H1 (cell line): ENCODE measurements at regions of chr6 and their contacts with region 1.

Region 1: GRCh38 chr6:42404484-42404883 is 47.2 kb downstream of the TRERF1 start:
- DNase-seq: peak in 1 of 2 experiments; percentile 38
- H3K4me3 ChIP-seq: no peak overlapping the region
- H3K27ac ChIP-seq: no peak overlapping the region
- H3K4me1 ChIP-seq: peaks cover 7 to 23% (median 19%) of the 10 kb centered on the region in 4 experiments; a peak in 6 of 7 replicates
- H3K27me3 ChIP-seq: no peaks in the 10 kb centered on the region
- CTCF ChIP-seq: no peak
- EP300 ChIP-seq: no peak
- POLR2A ChIP-seq: no peak
- RAD21 ChIP-seq: no peak

Region 2: DNA sequence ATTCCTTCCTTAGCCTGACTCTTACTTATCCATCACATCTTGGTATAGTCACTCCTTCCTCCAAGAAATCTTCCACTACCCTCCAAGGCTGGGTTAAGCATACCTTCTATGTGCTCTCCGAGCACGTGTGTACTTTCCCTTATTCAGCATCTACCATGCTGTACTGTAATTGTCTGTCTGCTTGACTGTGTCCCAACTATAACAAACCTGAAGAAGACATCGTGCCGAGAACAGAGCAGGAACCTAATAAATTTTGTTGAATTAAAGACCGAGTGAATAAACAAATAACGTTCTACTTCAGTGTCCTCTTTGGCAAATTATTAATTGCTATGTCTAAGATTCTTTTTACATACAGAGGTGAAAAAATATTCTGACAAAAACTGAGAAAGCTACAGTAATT is 545.1 kb before region 1 on chr6:
- CTCF ChIA-PET with region 1: no interaction called
- POLR2A ChIA-PET with region 1: no interaction called
- DNase-seq: no peak
- H3K4me3 ChIP-seq: no peak overlapping the region
- H3K27ac ChIP-seq: no peak overlapping the region
- H3K4me1 ChIP-seq: no peaks in the 10 kb centered on the region
- H3K27me3 ChIP-seq: no peaks in the 10 kb centered on the region
- CTCF ChIP-seq: no peak
- EP300 ChIP-seq: no peak
- POLR2A ChIP-seq: no peak
- RAD21 ChIP-seq: no peak

Region 3: DNA sequence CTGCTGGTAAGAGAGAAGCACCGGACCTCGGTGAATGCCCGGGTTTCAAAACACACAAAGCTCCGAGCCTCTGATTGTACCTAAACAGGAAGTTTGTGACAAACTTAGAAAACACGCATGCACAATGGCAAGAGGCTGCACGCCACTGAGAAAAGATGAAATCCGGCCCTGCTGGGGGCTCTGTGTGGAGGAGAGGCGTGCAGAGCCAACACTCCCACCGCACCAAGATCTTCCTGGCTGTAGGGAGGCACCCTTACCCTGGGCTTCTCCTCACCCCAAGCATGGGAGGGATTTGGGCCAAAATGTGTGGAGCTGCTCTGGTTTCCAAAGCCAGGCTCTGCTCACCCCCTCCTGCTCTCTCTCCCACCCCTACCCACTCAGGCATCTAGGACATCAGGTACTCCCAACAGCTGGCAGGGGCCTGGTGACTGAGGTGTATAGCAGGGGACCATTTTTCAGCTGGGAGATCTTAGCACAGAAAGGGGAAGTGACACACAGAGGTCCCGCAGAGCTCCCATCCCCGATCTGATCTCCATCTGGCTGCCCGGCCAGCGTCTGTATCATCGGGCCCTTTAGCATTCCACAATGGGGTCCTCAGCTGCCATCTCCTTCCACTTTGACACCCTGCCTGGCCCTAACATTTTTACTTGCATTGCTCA is 37.0 kb before region 1 on chr6:
- CTCF ChIA-PET with region 1: no interaction called
- POLR2A ChIA-PET with region 1: no interaction called
- DNase-seq: no peak
- H3K4me3 ChIP-seq: no peak overlapping the region
- H3K27ac ChIP-seq: no peak overlapping the region
- H3K4me1 ChIP-seq: peaks cover 0 to 3% (median 0%) of the 10 kb centered on the region in 4 experiments; a peak in 3 of 7 replicates
- H3K27me3 ChIP-seq: no peaks in the 10 kb centered on the region
- CTCF ChIP-seq: no peak
- EP300 ChIP-seq: no peak
- POLR2A ChIP-seq: no peak
- RAD21 ChIP-seq: no peak

Region 4: GRCh38 chr6:42419490-42420280 is 15.2 kb after region 1 on chr6:
- CTCF ChIA-PET with region 1: interaction called, 13 read pairs
- POLR2A ChIA-PET with region 1: interaction called, 4 read pairs
- DNase-seq: no peak
- H3K4me3 ChIP-seq: no peak overlapping the region
- H3K27ac ChIP-seq: no peak overlapping the region; the same call in 1 of the 2 replicates
- H3K4me1 ChIP-seq: peaks cover 9 to 18% (median 14%) of the 10 kb centered on the region in 4 experiments; a peak in 6 of 7 replicates
- H3K27me3 ChIP-seq: no peaks in the 10 kb centered on the region
- CTCF ChIP-seq: peak in 2 of 3 experiments; percentile 37 to 48; a peak in 2 of 4 replicates
- EP300 ChIP-seq: no peak
- POLR2A ChIP-seq: no peak
- RAD21 ChIP-seq: peak in 1 of 2 experiments; percentile 48; a peak in 3 of 4 replicates

Region 5: GRCh38 chr6:42440778-42441696 is 36.6 kb after region 1 on chr6:
- CTCF ChIA-PET with region 1: interaction called, 11 read pairs
- POLR2A ChIA-PET with region 1: interaction called, 3 read pairs
- DNase-seq: peak in 1 of 2 experiments; percentile 37
- H3K4me3 ChIP-seq: peak overlapping the region; percentile 12 to 54 (median 32); a peak in 7 of 8 replicates
- H3K27ac ChIP-seq: peak overlapping the region; percentile 47; the same call in 1 of the 2 replicates
- H3K4me1 ChIP-seq: peaks cover 32 to 61% (median 44%) of the 10 kb centered on the region in 4 experiments
- H3K27me3 ChIP-seq: no peaks in the 10 kb centered on the region
- CTCF ChIP-seq: no peak
- EP300 ChIP-seq: no peak
- POLR2A ChIP-seq: no peak
- RAD21 ChIP-seq: no peak

Region 6: DNA sequence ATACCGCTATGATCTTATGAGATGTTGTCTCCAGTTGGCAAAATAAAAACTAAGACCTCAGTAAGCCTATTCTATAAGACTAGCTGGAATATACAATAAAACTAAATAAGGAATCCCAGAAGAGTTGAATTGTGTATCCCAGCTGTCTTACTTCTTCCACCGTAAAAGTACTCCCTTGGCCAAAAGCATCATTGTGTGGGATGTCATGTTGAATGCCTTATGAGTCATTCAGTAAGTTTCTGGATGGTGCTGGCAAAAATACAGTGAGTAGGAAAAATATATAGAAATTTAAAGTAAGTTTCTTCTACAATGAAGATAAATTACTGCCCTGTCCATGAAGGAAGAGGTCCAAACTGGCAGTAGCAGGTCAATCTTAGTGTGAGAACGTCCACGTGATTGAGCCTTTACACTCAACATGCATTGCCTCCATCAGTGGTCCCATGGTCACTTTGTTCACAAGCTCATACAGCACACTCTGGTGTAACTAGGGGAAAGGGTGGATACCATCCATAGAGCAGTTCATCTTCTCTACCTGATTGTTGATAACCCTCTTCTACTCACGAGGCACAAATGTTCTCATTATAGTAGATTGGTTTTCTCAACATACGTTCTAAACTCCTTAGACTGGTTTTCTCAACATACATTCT is 978.7 kb after region 1 on chr6:
- CTCF ChIA-PET with region 1: no interaction called
- POLR2A ChIA-PET with region 1: no interaction called
- DNase-seq: no peak
- H3K4me3 ChIP-seq: no peak overlapping the region
- H3K27ac ChIP-seq: no peak overlapping the region
- H3K4me1 ChIP-seq: no peaks in the 10 kb centered on the region
- H3K27me3 ChIP-seq: no peaks in the 10 kb centered on the region
- CTCF ChIP-seq: no peak
- EP300 ChIP-seq: no peak
- POLR2A ChIP-seq: no peak
- RAD21 ChIP-seq: no peak